CD8-positive, alpha-beta memory T cell (primary cell): ENCODE measurements at regions of chr1 and their contacts with region 1.

Region 1: DNA sequence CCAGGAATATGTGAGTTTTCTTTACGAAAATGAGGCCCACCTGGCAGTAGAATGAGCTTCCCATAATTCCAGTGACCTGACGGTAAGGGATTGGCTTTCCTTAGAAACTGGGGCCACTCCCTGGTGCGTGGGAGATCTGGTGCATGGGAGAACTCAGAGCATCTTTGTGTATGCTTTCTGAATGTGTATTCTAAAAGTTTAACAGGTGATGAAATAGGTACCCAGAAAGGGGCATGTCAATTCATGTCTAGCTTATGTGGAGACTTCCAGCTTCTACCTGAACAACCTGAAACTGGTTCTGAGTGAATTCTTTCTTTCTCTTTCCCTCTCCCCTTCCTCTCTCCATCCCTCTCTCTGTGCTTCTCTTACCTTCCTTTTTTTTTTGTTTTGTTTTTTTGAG is 15.2 kb upstream of the FCRLA start:
- DNase-seq: no peak
- H3K4me3 ChIP-seq: no peak overlapping the region
- H3K4me3 Mint-ChIP-seq: no peak overlapping the region
- H3K27ac ChIP-seq: no peak overlapping the region
- H3K27ac Mint-ChIP-seq: no peak overlapping the region
- H3K4me1 ChIP-seq: no peaks in the 10 kb centered on the region
- H3K4me1 Mint-ChIP-seq: no peaks in the 10 kb centered on the region
- H3K27me3 ChIP-seq: no peaks in the 10 kb centered on the region
- H3K27me3 Mint-ChIP-seq: peaks cover 24 to 44% of the 10 kb centered on the region in 2 donors

Region 2: GRCh38 chr1:160795951-160796383 is 895.9 kb before region 1 on chr1 and contains the start of gene LY9:
- CTCF ChIA-PET with region 1: no interaction called
- POLR2A ChIA-PET with region 1: no interaction called
- DNase-seq: peak; percentile 65 to 93 (median 92)
- H3K4me3 ChIP-seq: peak within 1 kb of the TSS; percentile 80
- H3K4me3 Mint-ChIP-seq: peak within 1 kb of the TSS; percentile 96 to 99 (median 97)
- H3K27ac ChIP-seq: peak within 1 kb of the TSS; percentile 69
- H3K27ac Mint-ChIP-seq: peak within 1 kb of the TSS; percentile 92 to 98 (median 97)
- H3K4me1 ChIP-seq: peaks cover 34% of the 10 kb centered on the region
- H3K4me1 Mint-ChIP-seq: peaks cover 55 to 62% (median 57%) of the 10 kb centered on the region in 3 donors
- H3K27me3 ChIP-seq: no peaks in the 10 kb centered on the region
- H3K27me3 Mint-ChIP-seq: no peaks in the 10 kb centered on the region
- total RNA-seq, gene LY9: 16.4 to 16.5 TPM

Region 3: GRCh38 chr1:161676958-161677689 is 14.7 kb before region 1 on chr1:
- CTCF ChIA-PET with region 1: no interaction called
- POLR2A ChIA-PET with region 1: no interaction called
- DNase-seq: no peak
- H3K4me3 ChIP-seq: no peak overlapping the region
- H3K4me3 Mint-ChIP-seq: no peak overlapping the region
- H3K27ac ChIP-seq: no peak overlapping the region
- H3K27ac Mint-ChIP-seq: peak overlapping the region in 2 of 8 donors; percentile 28 to 96
- H3K4me1 ChIP-seq: no peaks in the 10 kb centered on the region
- H3K4me1 Mint-ChIP-seq: no peaks in the 10 kb centered on the region
- H3K27me3 ChIP-seq: no peaks in the 10 kb centered on the region
- H3K27me3 Mint-ChIP-seq: no peaks in the 10 kb centered on the region

Region 4: DNA sequence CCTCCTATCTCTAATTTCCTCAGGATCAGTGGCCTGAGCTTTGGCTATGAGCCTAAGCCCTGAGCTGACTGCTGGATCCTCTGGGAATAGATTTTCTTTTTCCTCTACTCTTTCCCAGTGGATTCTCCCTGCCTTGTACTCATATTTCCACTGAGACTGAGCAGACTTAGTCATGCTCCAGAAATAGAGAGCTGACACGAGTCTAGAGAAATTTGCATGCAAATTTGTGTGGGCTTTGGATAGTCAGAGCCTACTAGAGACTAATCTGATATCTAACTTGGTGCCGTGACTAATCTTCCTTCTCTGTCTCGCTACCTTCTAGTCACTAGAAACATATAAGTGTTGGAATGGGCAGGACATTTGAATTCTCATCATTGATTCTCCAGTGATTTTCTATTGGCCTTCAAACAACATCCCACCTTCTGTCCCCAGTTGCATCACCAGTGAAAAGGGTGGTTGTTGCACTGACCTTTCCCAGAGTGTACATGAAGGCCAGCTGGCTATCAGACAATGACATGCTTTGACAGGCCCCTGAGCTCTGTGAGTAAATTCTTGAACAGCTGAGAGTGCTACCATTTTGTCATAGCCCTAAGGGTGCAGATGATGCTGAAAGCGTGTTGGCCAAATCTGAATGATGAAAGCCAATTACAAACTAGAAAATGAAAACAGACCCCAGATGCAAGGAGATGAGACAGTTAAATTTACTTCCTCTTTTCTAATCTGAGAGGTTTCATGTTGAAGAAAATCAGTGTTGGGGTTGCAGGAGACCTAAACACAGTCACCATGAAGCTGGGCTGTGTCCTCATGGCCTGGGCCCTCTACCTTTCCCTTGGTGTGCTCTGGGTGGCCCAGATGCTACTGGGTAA is 14.9 kb after region 1 on chr1 and contains the start of gene FCRLA:
- CTCF ChIA-PET with region 1: no interaction called
- POLR2A ChIA-PET with region 1: interaction called, 10 read pairs
- DNase-seq: no peak
- H3K4me3 ChIP-seq: no peak within 1 kb of the TSS
- H3K4me3 Mint-ChIP-seq: no peak within 1 kb of the TSS
- H3K27ac ChIP-seq: no peak within 1 kb of the TSS
- H3K27ac Mint-ChIP-seq: no peak within 1 kb of the TSS
- H3K4me1 ChIP-seq: no peaks in the 10 kb centered on the region
- H3K4me1 Mint-ChIP-seq: no peaks in the 10 kb centered on the region
- H3K27me3 ChIP-seq: no peaks in the 10 kb centered on the region
- H3K27me3 Mint-ChIP-seq: peaks cover 4 to 5% of the 10 kb centered on the region in 2 donors
- total RNA-seq, gene FCRLA: not detected